Panc1 (cell line): ENCODE measurements at regions of chr13 and their contacts with region 1.

Region 1: GRCh38 chr13:23466144-23467002 is 32.9 kb upstream of the SACS start:
- DNase-seq: peak; percentile 42
- ATAC-seq: peak; percentile 97
- H3K4me3 ChIP-seq: peak overlapping the region; percentile 38 to 52
- H3K27ac ChIP-seq: no peak overlapping the region
- H3K4me1 ChIP-seq: no peaks in the 10 kb centered on the region
- H3K27me3 ChIP-seq: no peaks in the 10 kb centered on the region
- CTCF ChIP-seq: peak; percentile 67

Region 2: DNA sequence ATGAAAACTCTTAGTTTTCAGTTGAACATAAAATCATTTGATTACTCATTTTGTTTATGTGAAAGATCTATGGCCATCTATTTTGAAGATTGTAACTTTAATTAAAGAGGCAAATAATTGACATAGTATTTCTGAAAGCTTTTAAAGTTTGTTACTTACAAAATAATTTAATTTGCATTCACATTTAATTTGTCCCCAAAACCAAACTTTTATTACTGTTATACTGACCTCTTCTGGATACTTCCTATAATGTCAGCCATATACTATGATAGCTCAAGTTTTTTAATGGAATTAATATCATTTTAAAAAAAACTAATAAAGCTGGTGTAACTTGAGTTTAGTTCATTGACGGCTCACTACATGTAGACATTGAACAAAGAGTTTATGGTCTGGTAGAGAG is 290.5 kb before region 1 on chr13:
- CTCF ChIA-PET with region 1: no interaction called
- POLR2A ChIA-PET with region 1: no interaction called
- in situ Hi-C with region 1: no loop called
- intact Hi-C with region 1: no loop called
- DNase-seq: no peak
- ATAC-seq: no peak
- H3K4me3 ChIP-seq: no peak overlapping the region
- H3K27ac ChIP-seq: no peak overlapping the region
- H3K4me1 ChIP-seq: no peaks in the 10 kb centered on the region
- H3K27me3 ChIP-seq: no peaks in the 10 kb centered on the region
- CTCF ChIP-seq: no peak

Region 3: GRCh38 chr13:23567906-23568460 is 101.6 kb after region 1 on chr13:
- CTCF ChIA-PET with region 1: no interaction called
- POLR2A ChIA-PET with region 1: no interaction called
- in situ Hi-C with region 1: no loop called
- intact Hi-C with region 1: loop called (anchors 10 kb)
- DNase-seq: no peak
- ATAC-seq: no peak
- H3K4me3 ChIP-seq: no peak overlapping the region
- H3K27ac ChIP-seq: no peak overlapping the region
- H3K4me1 ChIP-seq: no peaks in the 10 kb centered on the region
- H3K27me3 ChIP-seq: peaks cover 16% of the 10 kb centered on the region
- CTCF ChIP-seq: peak; percentile 9; the same call in 1 of the 2 replicates

Region 4: GRCh38 chr13:23871616-23872220 is 405.3 kb after region 1 on chr13:
- CTCF ChIA-PET with region 1: no interaction called
- POLR2A ChIA-PET with region 1: no interaction called
- in situ Hi-C with region 1: no loop called
- intact Hi-C with region 1: loop called (anchors 5 kb)
- DNase-seq: no peak
- ATAC-seq: no peak
- H3K4me3 ChIP-seq: no peak overlapping the region
- H3K27ac ChIP-seq: no peak overlapping the region
- H3K4me1 ChIP-seq: no peaks in the 10 kb centered on the region
- H3K27me3 ChIP-seq: no peaks in the 10 kb centered on the region
- CTCF ChIP-seq: peak; percentile 47; the same call in 1 of the 2 replicates